Activated CD8-positive, alpha-beta T cell treated with anti-CD3 and anti-CD28 coated beads for 36 hours (primary cell): ENCODE measurements at regions of chr2 and their contacts with region 1.

Region 1: GRCh38 chr2:205925373-205926337 is 160.3 kb downstream of the INO80D start:
- DNase-seq: peak; percentile 78
- ATAC-seq: peak; percentile 96
- H3K4me3 Mint-ChIP-seq: no peak overlapping the region
- H3K27ac Mint-ChIP-seq: no peak overlapping the region
- H3K4me1 Mint-ChIP-seq: peaks cover 7% of the 10 kb centered on the region
- H3K27me3 Mint-ChIP-seq: peaks cover 42% of the 10 kb centered on the region
- CTCF ChIP-seq: peak; percentile 94

Region 2: GRCh38 chr2:205766779-205767359 is 158.8 kb before region 1 on chr2:
- CTCF ChIA-PET with region 1: interaction called, 3 read pairs
- POLR2A ChIA-PET with region 1: no interaction called
- intact Hi-C with region 1: loop called (anchors 5 kb)
- DNase-seq: peak; percentile 78
- ATAC-seq: no peak
- H3K4me3 Mint-ChIP-seq: no peak overlapping the region
- H3K27ac Mint-ChIP-seq: no peak overlapping the region
- H3K4me1 Mint-ChIP-seq: peaks cover 4% of the 10 kb centered on the region
- H3K27me3 Mint-ChIP-seq: peaks cover 15% of the 10 kb centered on the region
- CTCF ChIP-seq: peak; percentile 90

Region 3: DNA sequence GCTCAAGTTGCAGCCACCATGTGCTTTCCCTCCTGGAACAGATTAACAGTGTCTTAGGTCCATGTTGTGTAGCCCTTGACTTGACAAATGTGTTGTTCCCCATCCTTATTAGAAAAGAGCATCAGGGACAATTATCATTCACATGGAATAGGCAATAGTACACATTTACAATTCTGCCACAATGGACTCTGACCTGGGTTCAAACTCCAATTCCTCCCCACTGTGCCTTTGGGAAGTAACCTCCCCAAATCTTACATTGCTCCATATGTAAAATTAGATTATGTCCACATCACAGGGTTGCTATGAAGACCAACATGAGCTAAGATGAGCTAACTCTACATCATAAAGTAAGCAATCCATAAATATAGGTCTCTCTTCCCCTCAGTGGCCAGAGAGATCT is 49.5 kb before region 1 on chr2:
- CTCF ChIA-PET with region 1: no interaction called
- POLR2A ChIA-PET with region 1: no interaction called
- intact Hi-C with region 1: no loop called
- DNase-seq: no peak
- ATAC-seq: no peak
- H3K4me3 Mint-ChIP-seq: no peak overlapping the region
- H3K27ac Mint-ChIP-seq: no peak overlapping the region
- H3K4me1 Mint-ChIP-seq: no peaks in the 10 kb centered on the region
- H3K27me3 Mint-ChIP-seq: peaks cover 13% of the 10 kb centered on the region
- CTCF ChIP-seq: no peak

Region 4: GRCh38 chr2:205892251-205892655 is 33.4 kb before region 1 on chr2:
- CTCF ChIA-PET with region 1: no interaction called
- POLR2A ChIA-PET with region 1: no interaction called
- intact Hi-C with region 1: no loop called
- DNase-seq: no peak
- ATAC-seq: no peak
- H3K4me3 Mint-ChIP-seq: no peak overlapping the region
- H3K27ac Mint-ChIP-seq: no peak overlapping the region
- H3K4me1 Mint-ChIP-seq: no peaks in the 10 kb centered on the region
- H3K27me3 Mint-ChIP-seq: peaks cover 5% of the 10 kb centered on the region
- CTCF ChIP-seq: no peak

Region 5: GRCh38 chr2:205947621-205948495 is 22.2 kb after region 1 on chr2:
- CTCF ChIA-PET with region 1: interaction called, 16 read pairs
- POLR2A ChIA-PET with region 1: no interaction called
- intact Hi-C with region 1: no loop called
- DNase-seq: peak; percentile 73
- ATAC-seq: peak; percentile 79
- H3K4me3 Mint-ChIP-seq: no peak overlapping the region
- H3K27ac Mint-ChIP-seq: no peak overlapping the region
- H3K4me1 Mint-ChIP-seq: no peaks in the 10 kb centered on the region
- H3K27me3 Mint-ChIP-seq: peaks cover 15% of the 10 kb centered on the region
- CTCF ChIP-seq: peak; percentile 75